ENCODE measurements at regions of chr2 and their contacts with region 1.

Region 1: GRCh38 chr2:29196792-29197788 is 81.9 kb downstream of the CLIP4 start:
- DNase-seq: no peak
- H3K4me3 ChIP-seq: no peak overlapping the region
- CTCF ChIP-seq: peak; percentile 71

Region 2: DNA sequence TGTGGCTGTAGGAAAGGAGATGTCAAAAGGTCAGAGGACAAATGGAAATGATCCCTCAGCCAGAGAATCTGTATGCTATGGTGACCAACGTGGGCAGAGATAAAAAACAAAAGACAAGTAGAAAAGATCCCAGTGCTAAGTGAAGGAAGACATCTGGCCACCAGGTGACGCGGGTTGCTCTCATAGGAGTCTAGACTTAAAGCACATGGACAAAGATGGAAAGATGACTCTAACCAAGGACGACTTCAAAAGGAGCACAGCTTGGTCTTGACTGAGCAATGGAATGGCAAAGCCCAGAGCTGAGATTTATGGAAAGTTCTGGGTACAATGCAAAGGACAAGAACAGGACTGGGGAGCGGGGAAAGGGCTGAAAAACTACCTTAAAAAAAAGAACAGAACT is 14.9 kb after region 1 on chr2:
- CTCF ChIA-PET with region 1: interaction called, 14 read pairs
- POLR2A ChIA-PET with region 1: no interaction called
- DNase-seq: no peak
- H3K4me3 ChIP-seq: no peak overlapping the region
- CTCF ChIP-seq: peak; percentile 50

Measured in AG04449 (cell line).